Heart left ventricle (tissue), 16 donors: ENCODE measurements at regions of chr12 and their contacts with region 1.

Region 1: DNA sequence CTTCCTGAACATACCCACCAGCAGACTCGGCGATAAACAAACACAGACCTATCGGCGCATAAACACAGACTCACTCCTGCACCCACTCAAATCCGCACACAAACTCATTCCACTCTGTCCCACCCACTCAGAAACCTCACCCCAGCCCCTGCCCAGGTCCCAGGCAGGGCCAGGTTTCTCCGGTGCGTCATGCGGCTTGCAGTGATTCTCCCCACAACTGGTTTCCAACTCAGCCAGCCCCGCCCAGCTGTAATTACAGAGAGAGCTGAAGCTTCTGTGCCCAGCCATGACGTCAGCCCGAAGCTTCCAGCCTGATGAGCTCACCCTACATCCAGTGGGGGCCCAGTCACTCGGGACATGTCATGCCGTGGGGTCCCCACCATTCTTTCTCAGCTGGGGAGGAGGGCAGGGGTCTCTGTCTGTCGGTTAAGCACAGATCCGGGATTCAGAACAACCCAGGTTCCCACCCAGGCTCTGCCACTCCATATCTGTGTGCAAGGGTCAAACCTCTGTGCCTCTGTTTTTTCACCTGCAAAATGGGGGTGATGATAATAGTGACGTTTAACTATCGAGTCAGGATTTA is 2.4 kb upstream of the HSPB8 start:
- DNase-seq: peak; percentile 89 to 97 (median 92)
- ATAC-seq: peak; percentile 59 to 71 (median 68)
- H3K4me3 ChIP-seq: peak overlapping the region; percentile 11 to 71 (median 49)
- H3K27ac ChIP-seq: peak overlapping the region; percentile 45 to 99 (median 92)
- H3K4me1 ChIP-seq: peaks cover 0 to 35% (median 13%) of the 10 kb centered on the region in 12 donors
- H3K27me3 ChIP-seq: no peaks in the 10 kb centered on the region
- CTCF ChIP-seq: no peak
- POLR2A ChIP-seq: peak in 1 of 2 donors; percentile 72

Region 2: DNA sequence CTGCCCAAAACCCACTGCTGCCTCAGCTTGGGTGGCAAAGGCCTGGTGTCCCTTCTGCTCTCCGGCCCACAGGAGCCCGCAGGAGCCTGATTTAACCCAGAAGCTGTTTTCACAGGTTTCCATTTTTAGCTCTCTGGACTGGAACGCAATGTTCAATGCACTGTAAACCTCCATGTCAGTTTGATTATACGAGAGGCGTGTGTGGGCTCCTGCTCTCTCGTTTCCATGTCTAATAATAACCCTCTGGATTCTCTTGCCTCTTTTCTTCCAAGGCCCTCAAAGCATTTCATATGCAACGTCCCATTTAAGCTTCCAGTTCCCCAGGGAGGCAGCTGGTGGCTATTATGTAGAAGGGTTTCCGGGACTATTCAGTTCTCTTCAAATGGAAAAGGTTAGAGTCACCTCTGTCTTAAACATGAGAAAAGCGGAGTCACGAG is 638.9 kb before region 1 on chr12:
- intact Hi-C with region 1: loop called in 1 of 10 experiments (anchors 10 kb)
- DNase-seq: peak in 4 of 5 donors; percentile 28 to 66 (median 49)
- ATAC-seq: peak; percentile 94 to 97 (median 96)
- H3K4me3 ChIP-seq: no peak overlapping the region
- H3K27ac ChIP-seq: peak overlapping the region; percentile 66 to 97 (median 91)
- H3K4me1 ChIP-seq: peaks cover 0 to 26% (median 11%) of the 10 kb centered on the region in 12 donors
- H3K27me3 ChIP-seq: no peaks in the 10 kb centered on the region
- CTCF ChIP-seq: no peak
- POLR2A ChIP-seq: peak in 1 of 2 donors; percentile 26

Region 3: GRCh38 chr12:118560733-118561132 is 615.6 kb before region 1 on chr12:
- intact Hi-C with region 1: no loop called
- DNase-seq: peak in 4 of 5 donors; percentile 40 to 61 (median 44)
- ATAC-seq: peak; percentile 94 to 98 (median 96)
- H3K4me3 ChIP-seq: no peak overlapping the region
- H3K27ac ChIP-seq: no peak overlapping the region
- H3K4me1 ChIP-seq: peaks cover 0 to 10% (median 0%) of the 10 kb centered on the region in 12 donors
- H3K27me3 ChIP-seq: no peaks in the 10 kb centered on the region
- CTCF ChIP-seq: peak in 3 of 12 donors; percentile 7 to 26 (median 24)
- POLR2A ChIP-seq: no peak

Region 4: GRCh38 chr12:119122751-119123150 is 53.6 kb before region 1 on chr12:
- intact Hi-C with region 1: loop called in 3 of 10 experiments (anchors 5 kb)
- DNase-seq: no peak
- ATAC-seq: no peak
- H3K4me3 ChIP-seq: no peak overlapping the region
- H3K27ac ChIP-seq: no peak overlapping the region
- H3K4me1 ChIP-seq: no peaks in the 10 kb centered on the region
- H3K27me3 ChIP-seq: no peaks in the 10 kb centered on the region
- CTCF ChIP-seq: no peak
- POLR2A ChIP-seq: no peak

Region 5: GRCh38 chr12:119208622-119209061 is 32.3 kb after region 1 on chr12:
- intact Hi-C with region 1: loop called in 2 of 10 experiments (anchors 2 kb)
- DNase-seq: peak; percentile 81 to 94 (median 87)
- ATAC-seq: peak; percentile 94 to 95 (median 94)
- H3K4me3 ChIP-seq: no peak overlapping the region
- H3K27ac ChIP-seq: peak overlapping the region in 11 of 12 donors; percentile 1 to 78 (median 66)
- H3K4me1 ChIP-seq: peaks cover 0 to 45% (median 32%) of the 10 kb centered on the region in 12 donors
- H3K27me3 ChIP-seq: no peaks in the 10 kb centered on the region
- CTCF ChIP-seq: no peak
- POLR2A ChIP-seq: no peak

Region 6: GRCh38 chr12:119375075-119375882 is 198.9 kb after region 1 on chr12:
- intact Hi-C with region 1: loop called in 1 of 10 experiments (anchors 10 kb)
- DNase-seq: peak in 1 of 5 donors; percentile 26
- ATAC-seq: peak in 1 of 4 donors; percentile 2
- H3K4me3 ChIP-seq: no peak overlapping the region
- H3K27ac ChIP-seq: peak overlapping the region in 10 of 12 donors; percentile 2 to 81 (median 48)
- H3K4me1 ChIP-seq: peaks cover 0 to 50% (median 18%) of the 10 kb centered on the region in 12 donors
- H3K27me3 ChIP-seq: no peaks in the 10 kb centered on the region
- CTCF ChIP-seq: no peak
- POLR2A ChIP-seq: no peak